ENCODE measurements at regions of chr1 and their contacts with region 1.

Region 1: GRCh38 chr1:159009704-159010361 is at the start of gene IFI16:
- DNase-seq: peak; percentile 65
- H3K4me3 Mint-ChIP-seq: peak within 1 kb of the TSS; percentile 91
- H3K27ac Mint-ChIP-seq: peak within 1 kb of the TSS; percentile 95
- H3K4me1 Mint-ChIP-seq: peaks cover 64% of the 10 kb centered on the region
- H3K27me3 Mint-ChIP-seq: no peaks in the 10 kb centered on the region
- total RNA-seq, gene IFI16: 223 and 232 TPM in 2 replicates

Region 2: GRCh38 chr1:158285756-158286241 is 724.0 kb before region 1 on chr1:
- intact Hi-C with region 1: loop called (anchors 2 kb)
- DNase-seq: no peak
- H3K4me3 Mint-ChIP-seq: no peak overlapping the region
- H3K27ac Mint-ChIP-seq: peak overlapping the region; percentile 68
- H3K4me1 Mint-ChIP-seq: peaks cover 21% of the 10 kb centered on the region
- H3K27me3 Mint-ChIP-seq: peaks cover 5% of the 10 kb centered on the region

Region 3: DNA sequence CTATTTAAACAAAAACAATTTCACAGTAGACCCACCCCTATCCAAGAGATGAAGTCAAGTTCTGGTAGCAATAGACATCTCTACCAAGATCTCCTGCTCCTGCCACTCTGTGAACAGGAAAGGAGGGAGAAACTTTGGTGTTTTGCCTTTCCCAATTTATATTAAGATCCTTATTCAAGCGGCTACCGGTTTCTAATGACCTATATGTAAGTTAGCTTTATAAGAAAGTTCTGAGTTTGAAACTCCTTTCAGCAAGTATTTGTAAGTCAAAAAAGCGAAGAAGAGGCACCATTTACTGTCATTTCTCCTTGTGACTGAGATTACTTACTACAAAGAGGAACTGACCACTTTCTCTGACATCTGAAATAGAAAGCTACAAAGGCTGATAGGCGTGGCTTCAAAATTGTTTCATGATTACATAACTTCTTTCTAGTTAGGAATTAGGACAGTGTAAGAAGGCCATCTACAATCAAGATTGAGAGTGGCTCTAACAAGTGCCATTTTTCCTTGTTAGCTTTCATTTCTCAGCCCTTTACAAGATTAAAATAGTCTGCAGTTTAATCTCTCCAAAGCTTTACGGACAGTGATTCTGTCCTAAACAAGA is 178.8 kb before region 1 on chr1 and contains the start of gene MNDA:
- intact Hi-C with region 1: loop called (anchors 1 kb)
- DNase-seq: no peak
- H3K4me3 Mint-ChIP-seq: no peak within 1 kb of the TSS
- H3K27ac Mint-ChIP-seq: peak within 1 kb of the TSS; percentile 50
- H3K4me1 Mint-ChIP-seq: peaks cover 14% of the 10 kb centered on the region
- H3K27me3 Mint-ChIP-seq: peaks cover 3% of the 10 kb centered on the region
- total RNA-seq, gene MNDA: not detected in 2 replicates

Region 4: GRCh38 chr1:158969855-158970254 is 40.0 kb before region 1 on chr1:
- intact Hi-C with region 1: loop called (anchors 1 kb)
- DNase-seq: no peak
- H3K4me3 Mint-ChIP-seq: no peak overlapping the region
- H3K27ac Mint-ChIP-seq: peak overlapping the region; percentile 56
- H3K4me1 Mint-ChIP-seq: peaks cover 13% of the 10 kb centered on the region
- H3K27me3 Mint-ChIP-seq: peaks cover 3% of the 10 kb centered on the region